OCI-LY7 (cell line): ENCODE measurements at regions of chr1 and their contacts with region 1.

Region 1: DNA sequence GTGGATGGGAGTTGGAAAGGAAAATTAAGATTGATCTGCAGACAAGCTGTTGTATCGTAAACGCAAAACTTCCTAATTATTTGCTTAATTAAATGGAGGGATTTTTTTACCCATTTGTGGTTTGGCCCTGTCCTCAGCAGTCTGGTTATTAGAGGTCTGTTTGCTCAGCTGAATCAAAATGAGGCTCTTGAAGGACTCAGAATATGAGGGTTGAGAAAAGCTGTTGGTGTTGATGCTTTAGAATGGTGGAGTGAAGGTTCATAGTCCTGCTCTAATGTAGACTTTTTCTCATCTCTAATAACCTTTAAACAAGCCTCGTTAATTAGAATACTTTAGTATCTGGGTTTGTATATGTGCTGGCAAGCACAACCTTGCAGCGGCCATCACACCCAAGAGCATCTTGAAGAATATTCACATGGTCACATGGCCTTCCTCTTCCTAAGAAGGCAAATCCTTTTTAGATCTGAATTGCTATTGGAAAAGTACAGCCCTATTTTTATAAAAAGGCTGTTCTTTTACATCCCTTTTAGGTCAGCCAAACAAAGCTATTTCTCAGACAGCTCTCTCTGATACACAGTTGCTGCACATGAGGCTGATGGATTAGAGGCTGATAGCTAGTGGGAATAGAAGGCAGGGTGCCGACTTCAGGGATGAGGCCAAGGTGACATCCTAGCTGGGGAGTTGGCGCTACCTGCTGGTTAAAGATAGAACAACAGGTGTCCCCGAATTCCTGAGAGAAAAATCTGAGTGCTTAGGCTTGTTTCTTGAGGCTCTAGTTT is 53.8 kb downstream of the MACF1 start:
- DNase-seq: peak; percentile 68
- H3K4me3 ChIP-seq: no peak overlapping the region
- H3K27ac ChIP-seq: peak overlapping the region; percentile 38
- H3K4me1 ChIP-seq: peaks cover 29% of the 10 kb centered on the region
- CTCF ChIP-seq: peak; percentile 97

Region 2: DNA sequence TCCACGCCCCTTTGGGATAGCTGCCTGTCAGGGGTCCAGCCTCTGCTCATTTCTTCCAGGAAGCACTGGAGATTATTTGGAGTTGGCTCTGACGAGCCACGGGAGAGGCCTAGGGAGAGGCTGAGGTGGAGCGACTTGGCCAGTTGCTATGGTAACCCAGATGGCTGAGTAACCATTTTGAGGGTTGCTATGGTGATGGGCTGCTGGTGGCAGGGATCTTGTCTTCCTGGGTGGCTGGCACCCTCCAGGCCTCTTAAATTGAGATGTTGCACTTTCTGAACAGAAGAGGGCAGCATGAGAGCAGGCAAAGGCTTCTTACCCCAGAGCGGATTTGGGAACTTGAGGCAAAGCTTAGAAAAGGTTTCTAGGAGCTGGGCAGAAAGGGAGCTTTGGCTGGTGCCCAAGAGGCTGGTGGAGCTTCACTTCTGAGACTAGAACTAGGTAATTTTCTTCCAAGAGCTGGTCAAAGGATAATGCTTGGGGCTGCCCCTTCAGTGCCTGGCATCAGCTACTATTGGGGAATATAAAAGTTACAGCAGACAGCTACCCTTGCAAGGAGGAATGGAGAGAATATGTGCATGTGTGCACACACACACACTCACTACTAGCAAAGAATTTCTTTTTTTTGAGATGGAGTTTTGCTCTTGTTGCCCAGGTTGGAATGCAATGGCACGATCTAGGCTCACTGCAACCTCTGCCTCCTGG is 159.6 kb before region 1 on chr1:
- CTCF ChIA-PET with region 1: interaction called, 6 read pairs
- POLR2A ChIA-PET with region 1: no interaction called
- intact Hi-C with region 1: loop called (anchors 2 kb)
- DNase-seq: peak; percentile 81
- H3K4me3 ChIP-seq: no peak overlapping the region
- H3K27ac ChIP-seq: no peak overlapping the region
- H3K4me1 ChIP-seq: peaks cover 18% of the 10 kb centered on the region
- CTCF ChIP-seq: peak; percentile 89

Region 3: DNA sequence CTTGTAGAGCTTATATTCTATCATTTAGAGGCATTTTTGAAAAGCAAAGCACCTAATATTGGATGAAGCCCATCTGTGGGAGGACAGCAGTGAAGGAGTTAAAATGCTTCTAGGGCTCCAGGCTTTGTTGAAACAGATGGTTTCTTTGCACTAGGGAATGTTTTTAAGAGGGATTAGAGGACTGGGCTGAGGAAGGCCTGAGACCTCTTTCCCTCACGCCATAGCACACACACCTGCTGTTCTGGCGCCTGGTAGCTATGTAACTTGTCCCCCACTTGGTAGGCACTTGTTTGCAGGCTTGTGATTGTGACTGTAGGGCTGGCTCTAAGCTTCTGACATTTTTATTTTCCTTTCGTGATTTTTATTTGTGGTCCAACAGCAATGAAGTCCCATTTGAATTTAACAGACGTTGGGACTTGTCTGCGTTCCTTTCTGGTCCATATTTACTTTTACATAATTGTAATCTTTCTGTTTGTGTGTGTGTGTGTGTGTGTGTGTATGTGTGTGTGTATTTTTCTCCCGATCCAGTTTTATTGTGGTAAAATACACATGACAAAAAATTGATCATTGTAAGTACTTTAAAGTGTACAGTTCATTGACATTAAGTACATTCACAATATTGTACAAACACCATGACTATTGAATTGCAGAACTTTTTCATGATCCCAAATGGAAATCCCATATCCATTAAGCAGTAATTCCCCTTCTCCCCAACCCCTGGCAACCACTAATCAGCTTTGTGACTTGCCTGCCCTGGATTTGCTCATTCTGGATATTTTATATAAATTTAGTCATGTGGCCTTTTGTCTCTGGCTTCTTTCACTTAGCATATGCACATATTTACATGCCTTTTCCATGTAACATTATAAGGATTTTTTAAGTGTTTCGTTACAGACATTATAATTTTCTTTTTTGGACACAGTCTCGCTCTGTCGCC is 87.3 kb before region 1 on chr1:
- CTCF ChIA-PET with region 1: no interaction called
- POLR2A ChIA-PET with region 1: no interaction called
- intact Hi-C with region 1: no loop called
- DNase-seq: no peak
- H3K4me3 ChIP-seq: no peak overlapping the region
- H3K27ac ChIP-seq: no peak overlapping the region
- H3K4me1 ChIP-seq: no peaks in the 10 kb centered on the region
- CTCF ChIP-seq: no peak